ENCODE measurements at regions of chr11 and their contacts with region 1.

Region 1: DNA sequence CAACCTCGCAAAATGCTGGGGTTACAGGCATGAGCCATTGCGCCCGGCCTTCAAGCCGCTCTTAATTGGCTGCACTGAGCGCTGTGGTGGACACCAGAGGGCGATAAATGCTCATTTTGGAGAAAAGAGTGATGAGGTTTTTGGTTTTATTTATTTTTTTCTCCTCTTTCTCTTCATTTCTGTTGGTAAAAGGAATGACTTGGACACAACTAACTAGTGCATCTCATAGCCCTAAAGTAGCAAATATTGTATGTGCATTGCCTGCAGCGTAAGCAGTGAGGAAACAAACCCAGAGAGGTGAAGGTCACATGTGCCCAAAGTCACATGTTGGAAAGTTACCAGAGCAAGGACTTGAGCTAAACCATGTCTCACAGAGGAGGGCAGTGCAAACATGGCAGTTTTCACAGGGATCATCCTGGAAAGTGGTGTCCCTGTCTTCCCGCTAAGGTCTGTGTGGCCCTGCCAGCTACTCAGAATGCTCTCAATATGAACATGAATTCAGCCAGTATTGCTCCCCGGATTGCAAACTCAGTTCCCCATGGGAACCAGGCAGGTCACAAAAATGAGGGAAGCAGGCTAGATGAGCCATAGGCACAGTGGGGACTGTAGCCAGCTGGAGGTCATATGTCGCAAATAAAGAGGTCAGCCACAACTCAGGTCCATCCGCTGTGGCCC is 8.6 kb upstream of the CD82 start:
- DNase-seq: no peak
- H3K4me3 ChIP-seq: peak overlapping the region in 1 of 2 experiments; percentile 28; a peak in 1 of 4 replicates
- H3K27ac ChIP-seq: no peak overlapping the region
- H3K4me1 ChIP-seq: peaks cover 0 to 5% of the 10 kb centered on the region in 2 experiments; a peak in 1 of 4 replicates
- H3K27me3 ChIP-seq: no peaks in the 10 kb centered on the region
- CTCF ChIP-seq: peak; percentile 91
- EP300 ChIP-seq: no peak
- RAD21 ChIP-seq: peak; percentile 85

Region 2: DNA sequence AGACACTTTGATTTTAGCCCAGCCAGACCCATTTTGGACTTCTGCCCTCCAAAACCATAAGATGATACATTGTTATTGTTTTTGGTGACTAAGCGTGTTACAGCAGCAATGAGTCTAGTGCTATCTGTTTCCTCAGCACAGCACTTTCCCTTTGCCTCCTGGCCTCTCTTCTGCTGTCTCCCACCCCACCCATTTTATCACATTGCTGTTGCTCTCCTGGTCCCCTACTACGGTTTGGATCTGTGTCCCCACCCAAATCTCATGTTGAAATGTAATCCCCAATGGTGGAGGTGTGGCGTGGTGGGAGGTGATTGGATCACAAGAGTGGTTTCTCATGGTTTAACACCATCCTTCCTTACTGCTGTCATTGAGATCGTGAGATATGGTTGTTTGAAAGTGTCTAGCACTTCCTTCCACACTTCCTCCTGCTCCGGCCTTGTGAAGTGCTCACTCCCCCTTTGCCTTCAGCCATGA is 51.3 kb before region 1 on chr11:
- CTCF ChIA-PET with region 1: no interaction called
- POLR2A ChIA-PET with region 1: no interaction called
- DNase-seq: no peak
- H3K4me3 ChIP-seq: no peak overlapping the region
- H3K27ac ChIP-seq: no peak overlapping the region
- H3K4me1 ChIP-seq: no peaks in the 10 kb centered on the region
- H3K27me3 ChIP-seq: no peaks in the 10 kb centered on the region; the same call in 1 of the 2 replicates
- CTCF ChIP-seq: no peak
- EP300 ChIP-seq: no peak
- RAD21 ChIP-seq: no peak

Region 3: DNA sequence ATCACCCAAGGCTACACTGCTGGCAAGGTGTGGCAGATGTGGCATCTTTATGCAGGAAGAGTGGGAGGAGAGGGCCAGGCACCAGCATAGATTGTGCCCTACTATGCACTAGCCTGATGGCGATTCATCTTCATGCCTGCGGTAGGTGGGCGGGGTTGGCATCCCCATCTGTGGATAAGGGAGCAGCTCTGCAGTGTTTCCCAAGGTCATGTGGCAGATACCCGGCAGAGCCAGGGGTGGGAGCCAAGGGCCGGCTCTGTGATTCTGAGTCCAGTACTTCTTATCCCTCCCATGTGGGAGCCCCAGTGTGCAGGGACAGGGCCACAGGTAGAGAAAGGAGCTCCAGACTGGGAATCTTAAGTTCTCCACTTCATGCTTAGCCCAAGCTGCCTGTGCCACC is 28.5 kb after region 1 on chr11:
- CTCF ChIA-PET with region 1: interaction called, 14 read pairs
- POLR2A ChIA-PET with region 1: no interaction called
- DNase-seq: no peak
- H3K4me3 ChIP-seq: no peak overlapping the region
- H3K27ac ChIP-seq: no peak overlapping the region
- H3K4me1 ChIP-seq: peaks cover 0 to 16% of the 10 kb centered on the region in 2 experiments; a peak in 1 of 4 replicates
- H3K27me3 ChIP-seq: no peaks in the 10 kb centered on the region
- CTCF ChIP-seq: no peak
- EP300 ChIP-seq: no peak
- RAD21 ChIP-seq: no peak

Region 4: GRCh38 chr11:44592125-44592940 is 35.5 kb after region 1 on chr11:
- CTCF ChIA-PET with region 1: interaction called, 14 read pairs
- POLR2A ChIA-PET with region 1: no interaction called
- DNase-seq: no peak
- H3K4me3 ChIP-seq: no peak overlapping the region
- H3K27ac ChIP-seq: peak overlapping the region in 1 of 2 experiments; percentile 51; a peak in 1 of 4 replicates
- H3K4me1 ChIP-seq: peaks cover 0 to 35% of the 10 kb centered on the region in 2 experiments; a peak in 1 of 4 replicates
- H3K27me3 ChIP-seq: no peaks in the 10 kb centered on the region
- CTCF ChIP-seq: no peak
- EP300 ChIP-seq: no peak
- RAD21 ChIP-seq: no peak

Region 5: DNA sequence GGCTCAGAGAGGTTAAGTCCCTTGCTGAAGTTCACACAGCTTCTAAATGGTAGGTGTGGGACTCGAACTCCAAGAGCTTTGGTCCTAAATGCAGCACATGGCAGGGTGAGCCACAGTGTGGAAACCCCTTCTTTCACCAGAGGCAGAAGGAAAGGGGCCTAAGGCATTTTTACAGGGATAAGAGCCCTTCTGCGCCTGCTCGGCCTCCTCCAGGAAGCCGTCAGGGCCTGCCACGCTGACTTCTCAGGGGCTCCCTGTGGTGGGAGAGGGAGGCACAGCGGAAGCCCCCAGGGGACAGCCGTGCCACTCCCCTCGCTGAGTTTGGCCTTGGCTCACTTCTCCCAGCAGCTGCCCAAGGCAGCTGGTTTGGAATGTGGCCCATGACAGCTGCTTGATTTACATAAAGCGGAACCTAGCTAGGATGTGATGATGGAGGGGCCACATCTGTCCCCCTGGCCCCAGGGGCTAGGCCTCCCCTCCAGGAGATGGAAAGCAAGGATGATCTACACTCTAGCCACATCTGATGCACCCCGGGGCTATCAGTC is 44.0 kb after region 1 on chr11:
- CTCF ChIA-PET with region 1: interaction called, 23 read pairs
- POLR2A ChIA-PET with region 1: no interaction called
- DNase-seq: no peak
- H3K4me3 ChIP-seq: no peak overlapping the region
- H3K27ac ChIP-seq: no peak overlapping the region
- H3K4me1 ChIP-seq: peaks cover 0 to 30% of the 10 kb centered on the region in 2 experiments; a peak in 1 of 4 replicates
- H3K27me3 ChIP-seq: no peaks in the 10 kb centered on the region
- CTCF ChIP-seq: no peak
- EP300 ChIP-seq: no peak
- RAD21 ChIP-seq: no peak